Transverse colon (tissue), 4 donors: ENCODE measurements at regions of chr10 and their contacts with region 1.

Region 1: GRCh38 chr10:80205478-80206276 is at the start of gene ANXA11:
- DNase-seq: peak; percentile 92
- H3K4me3 ChIP-seq: peak within 1 kb of the TSS; percentile 86 to 96 (median 90)
- H3K27ac ChIP-seq: peak within 1 kb of the TSS; percentile 99 to 100 (median 100)
- H3K4me1 ChIP-seq: peaks cover 26 to 67% (median 54%) of the 10 kb centered on the region in 4 donors
- H3K27me3 ChIP-seq: no peaks in the 10 kb centered on the region
- CTCF ChIP-seq: peak in 2 of 5 experiments; percentile 11 to 26
- EP300 ChIP-seq: no peak
- POLR2A ChIP-seq: peak; percentile 99
- total RNA-seq, gene ANXA11: 134 to 247 (median 219) TPM

Region 2: DNA sequence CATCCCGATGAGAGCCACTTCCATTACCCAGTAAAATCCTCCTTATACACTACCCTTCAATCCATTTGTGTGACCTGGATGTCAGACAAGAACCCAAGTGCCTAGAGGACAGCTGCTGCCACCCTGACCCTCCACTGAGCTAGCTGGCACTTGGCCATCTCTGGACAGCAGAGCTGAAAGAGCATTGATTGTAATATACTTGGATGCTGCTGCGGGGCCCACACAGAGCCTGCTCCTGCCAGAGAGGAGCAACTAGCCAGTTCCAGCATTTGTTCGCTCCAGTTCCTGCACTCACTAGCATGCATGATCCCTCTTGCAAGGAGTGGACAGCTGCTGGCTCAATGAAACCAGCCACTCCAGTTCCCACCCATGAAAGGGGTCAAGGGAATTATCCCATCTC is 135.6 kb before region 1 on chr10:
- in situ Hi-C with region 1: loop called in 1 of 4 experiments (anchors 25 kb)
- intact Hi-C with region 1: no loop called
- DNase-seq: no peak
- H3K4me3 ChIP-seq: no peak overlapping the region
- H3K27ac ChIP-seq: no peak overlapping the region
- H3K4me1 ChIP-seq: no peaks in the 10 kb centered on the region
- H3K27me3 ChIP-seq: no peaks in the 10 kb centered on the region
- CTCF ChIP-seq: no peak
- EP300 ChIP-seq: no peak
- POLR2A ChIP-seq: no peak

Region 3: DNA sequence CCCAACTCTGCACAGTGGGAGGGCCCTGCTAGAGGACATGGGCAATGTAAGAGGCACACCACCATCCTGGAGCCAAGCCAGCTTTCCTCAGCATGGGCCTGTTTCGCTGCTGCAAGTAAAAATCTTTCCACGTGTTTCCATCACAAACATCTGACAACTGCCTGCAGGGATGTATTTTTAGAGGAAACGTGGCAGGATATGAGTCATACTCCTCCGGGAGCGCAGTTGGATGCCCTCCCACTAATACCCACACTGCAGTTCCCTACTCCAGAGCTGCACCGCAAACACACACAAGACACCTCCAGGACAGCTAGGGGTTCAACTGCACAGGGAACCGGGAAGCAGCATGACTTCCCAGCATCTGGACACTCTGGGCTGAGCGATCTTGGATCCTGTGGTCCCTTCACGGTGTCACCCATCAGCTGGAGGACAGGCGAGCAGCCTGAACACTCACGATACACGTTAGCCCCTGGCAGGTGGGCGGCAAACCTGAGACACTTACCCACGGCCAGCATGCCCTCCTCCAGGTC is 47.0 kb before region 1 on chr10:
- in situ Hi-C with region 1: loop called in 2 of 4 experiments (anchors 5 to 10 kb)
- intact Hi-C with region 1: loop called (anchors 5 kb)
- DNase-seq: peak; percentile 67
- H3K4me3 ChIP-seq: no peak overlapping the region
- H3K27ac ChIP-seq: peak overlapping the region; percentile 74 to 84 (median 77)
- H3K4me1 ChIP-seq: peaks cover 13 to 32% (median 17%) of the 10 kb centered on the region in 4 donors
- H3K27me3 ChIP-seq: no peaks in the 10 kb centered on the region
- CTCF ChIP-seq: no peak
- EP300 ChIP-seq: no peak
- POLR2A ChIP-seq: no peak

Region 4: GRCh38 chr10:80730522-80730921 is 524.8 kb after region 1 on chr10:
- in situ Hi-C with region 1: no loop called
- intact Hi-C with region 1: no loop called
- DNase-seq: no peak
- H3K4me3 ChIP-seq: no peak overlapping the region
- H3K27ac ChIP-seq: no peak overlapping the region
- H3K4me1 ChIP-seq: no peaks in the 10 kb centered on the region
- H3K27me3 ChIP-seq: no peaks in the 10 kb centered on the region
- CTCF ChIP-seq: no peak
- EP300 ChIP-seq: no peak
- POLR2A ChIP-seq: no peak